HAP-1 (cell line): ENCODE measurements at regions of chr1 and their contacts with region 1.

Region 1: GRCh38 chr1:117929173-117929989 is at the starts of genes GDAP2 and WDR3:
- DNase-seq: peak; percentile 96 to 98
- H3K4me3 ChIP-seq: peak within 1 kb of the TSS; percentile 96
- H3K4me1 ChIP-seq: peaks cover 25% of the 10 kb centered on the region
- H3K27me3 ChIP-seq: no peaks in the 10 kb centered on the region

Region 2: DNA sequence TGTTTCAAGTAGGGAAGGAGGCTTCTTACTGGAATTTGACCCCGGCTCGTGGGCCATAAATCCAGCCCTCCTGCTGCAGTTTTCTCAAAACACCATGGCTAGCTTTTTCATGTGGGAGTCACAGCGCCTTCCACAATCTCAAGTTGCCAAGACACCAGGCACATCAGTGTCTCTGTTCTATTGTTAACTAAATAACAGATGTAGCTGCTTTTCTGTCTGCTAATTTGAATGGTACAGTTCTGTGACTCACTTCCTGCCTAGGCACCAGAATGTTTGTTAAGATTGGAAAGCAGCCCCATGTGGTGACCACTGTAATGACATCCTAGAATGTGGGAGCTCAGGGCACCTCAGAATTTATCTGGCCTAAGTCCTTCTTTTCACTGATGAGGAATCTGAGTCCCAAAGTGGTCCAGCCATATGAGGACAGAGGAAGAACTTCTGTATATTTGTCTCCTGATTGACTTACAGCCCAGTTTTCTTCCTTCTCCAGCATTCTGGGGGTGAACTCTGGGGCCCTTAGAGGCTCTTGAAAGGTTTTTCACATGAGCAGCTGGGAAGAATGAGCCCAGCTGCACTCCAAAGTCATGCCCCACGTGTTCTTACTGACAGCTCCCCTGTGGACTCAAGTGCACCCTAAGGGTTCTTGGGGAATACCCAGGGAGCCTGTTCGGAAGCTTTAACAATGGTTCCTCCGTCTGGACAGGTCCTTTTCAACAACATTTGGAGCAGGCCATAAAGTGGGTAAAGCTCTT is 835.3 kb before region 1 on chr1:
- in situ Hi-C with region 1: loop called (anchors 25 kb)
- DNase-seq: no peak
- H3K4me3 ChIP-seq: no peak overlapping the region
- H3K4me1 ChIP-seq: no peaks in the 10 kb centered on the region; the same call in 1 of the 2 replicates
- H3K27me3 ChIP-seq: no peaks in the 10 kb centered on the region